Heart left ventricle (tissue), 16 donors: ENCODE measurements at regions of chr10 and their contacts with region 1.

Region 1: GRCh38 chr10:84264611-84265141 is 19.8 kb downstream of the RGR start:
- DNase-seq: peak in 4 of 5 donors; percentile 52 to 68 (median 60)
- ATAC-seq: peak; percentile 69 to 95 (median 90)
- H3K4me3 ChIP-seq: no peak overlapping the region
- H3K27ac ChIP-seq: no peak overlapping the region
- H3K4me1 ChIP-seq: peaks cover 0 to 7% (median 2%) of the 10 kb centered on the region in 12 donors
- H3K27me3 ChIP-seq: peaks cover 0 to 13% (median 0%) of the 10 kb centered on the region in 9 donors
- CTCF ChIP-seq: peak; percentile 84 to 96 (median 92)
- POLR2A ChIP-seq: no peak

Region 2: GRCh38 chr10:83706952-83707582 is 557.6 kb before region 1 on chr10:
- intact Hi-C with region 1: no loop called
- DNase-seq: no peak
- ATAC-seq: no peak
- H3K4me3 ChIP-seq: no peak overlapping the region
- H3K27ac ChIP-seq: no peak overlapping the region
- H3K4me1 ChIP-seq: no peaks in the 10 kb centered on the region
- H3K27me3 ChIP-seq: no peaks in the 10 kb centered on the region
- CTCF ChIP-seq: no peak
- POLR2A ChIP-seq: no peak

Region 3: GRCh38 chr10:84333864-84334451 is 69.3 kb after region 1 on chr10:
- intact Hi-C with region 1: loop called in 1 of 10 experiments (anchors 5 kb)
- DNase-seq: no peak
- ATAC-seq: peak in 1 of 4 donors; percentile 36
- H3K4me3 ChIP-seq: no peak overlapping the region
- H3K27ac ChIP-seq: peak overlapping the region in 1 of 12 donors; percentile 28
- H3K4me1 ChIP-seq: peaks cover 0 to 93% (median 51%) of the 10 kb centered on the region in 12 donors
- H3K27me3 ChIP-seq: no peaks in the 10 kb centered on the region
- CTCF ChIP-seq: no peak
- POLR2A ChIP-seq: no peak

Region 4: DNA sequence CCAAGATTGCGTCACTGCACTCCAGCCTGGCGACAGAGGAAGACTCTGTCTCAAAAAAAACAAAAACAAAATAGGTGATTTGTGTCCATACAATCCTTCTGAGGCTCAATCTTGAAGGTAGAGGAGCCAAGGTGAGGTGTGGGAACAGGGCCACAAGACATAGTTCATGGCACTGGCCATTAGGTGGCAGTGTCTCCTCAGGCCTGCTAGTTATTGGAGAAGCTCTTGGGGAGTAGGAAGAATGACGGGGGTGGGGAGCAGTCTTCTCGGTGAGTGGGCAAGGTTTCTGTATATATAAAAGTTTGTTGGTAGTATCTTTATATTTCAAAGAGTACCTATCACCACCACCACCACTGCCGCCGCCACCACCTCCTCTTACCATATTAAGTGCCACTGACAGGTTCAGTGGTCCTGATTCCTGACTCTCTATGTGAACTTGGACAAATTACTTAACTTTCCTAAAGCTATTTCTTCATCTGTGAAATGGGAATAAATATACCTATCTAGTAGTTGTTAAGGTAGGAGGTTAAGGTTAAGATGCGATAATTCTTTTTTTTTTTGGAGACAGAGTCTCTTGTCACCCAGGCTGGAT is 87.7 kb after region 1 on chr10:
- intact Hi-C with region 1: loop called in 1 of 10 experiments (anchors 5 kb)
- DNase-seq: peak; percentile 39 to 56 (median 48)
- ATAC-seq: peak in 3 of 4 donors; percentile 65 to 80 (median 79)
- H3K4me3 ChIP-seq: no peak overlapping the region
- H3K27ac ChIP-seq: no peak overlapping the region
- H3K4me1 ChIP-seq: peaks cover 0 to 52% (median 24%) of the 10 kb centered on the region in 12 donors
- H3K27me3 ChIP-seq: no peaks in the 10 kb centered on the region
- CTCF ChIP-seq: peak; percentile 54 to 76 (median 66)
- POLR2A ChIP-seq: no peak

Region 5: DNA sequence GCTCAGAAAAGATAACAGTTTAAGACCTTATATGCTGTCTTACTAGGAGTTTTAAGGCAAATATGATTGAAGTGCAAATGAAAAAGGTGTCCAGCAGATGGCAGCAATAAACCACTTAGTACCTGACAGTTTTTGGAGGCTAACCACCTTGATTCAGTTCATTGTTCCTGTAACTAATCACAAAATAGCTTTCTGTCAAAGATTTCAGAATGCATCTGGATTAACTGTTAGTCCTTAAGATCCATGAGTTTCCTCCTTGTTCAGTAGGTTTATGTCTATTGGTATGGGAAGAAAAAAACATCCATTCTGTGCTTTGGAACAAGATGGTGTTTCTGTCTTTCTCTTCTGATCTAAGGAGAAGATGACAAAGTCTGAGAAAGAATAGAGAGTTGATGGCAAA is 110.3 kb after region 1 on chr10:
- intact Hi-C with region 1: loop called (anchors 2 to 10 kb)
- DNase-seq: peak in 1 of 5 donors; percentile 11
- ATAC-seq: peak in 1 of 4 donors; percentile 50
- H3K4me3 ChIP-seq: no peak overlapping the region
- H3K27ac ChIP-seq: no peak overlapping the region
- H3K4me1 ChIP-seq: peaks cover 0 to 5% (median 0%) of the 10 kb centered on the region in 12 donors
- H3K27me3 ChIP-seq: no peaks in the 10 kb centered on the region
- CTCF ChIP-seq: peak; percentile 50 to 83 (median 70)
- POLR2A ChIP-seq: no peak